ENCODE measurements at regions of chr3 and their contacts with region 1.

Region 1: GRCh38 chr3:113912552-113913236 is 35.1 kb upstream of the ZDHHC23 start:
- DNase-seq: peak in 1 of 3 donors; percentile 66
- ATAC-seq: peak; percentile 97
- H3K4me3 ChIP-seq: no peak overlapping the region
- H3K4me1 ChIP-seq: no peaks in the 10 kb centered on the region
- CTCF ChIP-seq: no peak

Region 2: GRCh38 chr3:113736548-113737089 is 176.1 kb before region 1 on chr3:
- intact Hi-C with region 1: loop called in 1 of 2 experiments (anchors 5 kb)
- DNase-seq: no peak
- ATAC-seq: peak; percentile 76
- H3K4me3 ChIP-seq: no peak overlapping the region
- H3K4me1 ChIP-seq: no peaks in the 10 kb centered on the region
- CTCF ChIP-seq: no peak

Region 3: DNA sequence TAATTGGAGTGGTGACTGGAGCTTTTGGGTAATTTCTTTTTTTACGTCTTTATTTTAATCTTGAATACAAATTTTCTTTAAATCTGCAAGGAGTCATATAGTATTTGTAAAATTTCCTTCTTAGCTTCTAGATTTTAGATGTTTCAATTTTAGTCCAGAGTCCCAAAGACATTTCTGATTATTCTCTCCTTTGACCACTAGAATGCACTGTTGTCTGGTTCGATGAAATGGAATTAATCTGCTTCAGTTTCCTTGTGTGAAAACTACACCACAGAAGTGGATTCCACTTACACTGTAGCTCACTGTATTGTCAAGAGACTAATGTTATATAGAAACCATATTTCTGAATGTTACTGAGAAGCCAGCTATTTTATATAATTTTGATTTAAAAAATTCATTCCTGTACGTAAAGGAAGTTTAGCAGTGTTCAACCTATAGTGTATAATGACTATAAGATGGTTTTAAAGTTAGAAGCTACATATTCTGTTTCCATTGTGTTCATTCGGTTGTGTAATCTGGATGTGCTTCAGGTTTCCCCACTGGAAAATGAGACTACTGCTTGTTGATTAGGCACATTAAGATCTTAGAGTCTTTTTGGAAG is 68.0 kb before region 1 on chr3:
- intact Hi-C with region 1: loop called in 1 of 2 experiments (anchors 5 kb)
- DNase-seq: no peak
- ATAC-seq: peak; percentile 74
- H3K4me3 ChIP-seq: no peak overlapping the region
- H3K4me1 ChIP-seq: peaks cover 8% of the 10 kb centered on the region
- CTCF ChIP-seq: peak; percentile 16

Region 4: DNA sequence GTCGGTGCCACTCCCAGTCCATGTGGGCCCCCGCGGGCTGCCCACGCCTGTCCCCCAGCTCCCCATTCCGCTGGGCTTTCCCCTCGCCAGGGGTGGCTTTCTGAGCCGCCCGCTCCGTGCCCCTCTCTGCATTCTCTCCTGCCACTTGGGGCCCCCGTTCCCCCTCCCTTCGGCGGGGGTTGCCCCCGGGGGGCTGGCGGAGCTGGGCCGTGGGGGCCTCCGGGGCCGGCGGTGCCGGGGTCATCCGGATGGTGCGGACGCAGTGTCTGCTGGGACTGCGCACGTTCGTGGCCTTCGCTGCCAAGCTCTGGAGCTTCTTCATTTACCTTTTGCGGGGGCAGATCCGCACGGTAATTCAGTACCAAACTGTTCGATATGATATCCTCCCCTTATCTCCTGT is 27.6 kb before region 1 on chr3:
- intact Hi-C with region 1: no loop called
- DNase-seq: no peak
- ATAC-seq: no peak
- H3K4me3 ChIP-seq: no peak overlapping the region
- H3K4me1 ChIP-seq: no peaks in the 10 kb centered on the region
- CTCF ChIP-seq: no peak

Measured in mucosa of descending colon (tissue), 3 donors.